PC-3 (cell line): ENCODE measurements at regions of chr3 and their contacts with region 1.

Region 1: GRCh38 chr3:51879937-51880336 is 4.5 kb upstream of the IQCF5 start:
- DNase-seq: peak; percentile 27
- ATAC-seq: no peak; the same call in 1 of the 2 replicates
- H3K4me3 ChIP-seq: no peak overlapping the region
- H3K27ac ChIP-seq: no peak overlapping the region
- H3K4me1 ChIP-seq: peaks cover 5% of the 10 kb centered on the region; the same call in 1 of the 2 replicates
- H3K27me3 ChIP-seq: peaks cover 6% of the 10 kb centered on the region; the same call in 1 of the 2 replicates
- CTCF ChIP-seq: no peak

Region 2: GRCh38 chr3:51845129-51845528 is 34.8 kb before region 1 on chr3:
- CTCF ChIA-PET with region 1: no interaction called
- POLR2A ChIA-PET with region 1: no interaction called
- intact Hi-C with region 1: loop called (anchors 1 kb)
- DNase-seq: no peak
- ATAC-seq: no peak
- H3K4me3 ChIP-seq: no peak overlapping the region
- H3K27ac ChIP-seq: no peak overlapping the region
- H3K4me1 ChIP-seq: no peaks in the 10 kb centered on the region
- H3K27me3 ChIP-seq: peaks cover 74% of the 10 kb centered on the region
- CTCF ChIP-seq: no peak

Region 3: DNA sequence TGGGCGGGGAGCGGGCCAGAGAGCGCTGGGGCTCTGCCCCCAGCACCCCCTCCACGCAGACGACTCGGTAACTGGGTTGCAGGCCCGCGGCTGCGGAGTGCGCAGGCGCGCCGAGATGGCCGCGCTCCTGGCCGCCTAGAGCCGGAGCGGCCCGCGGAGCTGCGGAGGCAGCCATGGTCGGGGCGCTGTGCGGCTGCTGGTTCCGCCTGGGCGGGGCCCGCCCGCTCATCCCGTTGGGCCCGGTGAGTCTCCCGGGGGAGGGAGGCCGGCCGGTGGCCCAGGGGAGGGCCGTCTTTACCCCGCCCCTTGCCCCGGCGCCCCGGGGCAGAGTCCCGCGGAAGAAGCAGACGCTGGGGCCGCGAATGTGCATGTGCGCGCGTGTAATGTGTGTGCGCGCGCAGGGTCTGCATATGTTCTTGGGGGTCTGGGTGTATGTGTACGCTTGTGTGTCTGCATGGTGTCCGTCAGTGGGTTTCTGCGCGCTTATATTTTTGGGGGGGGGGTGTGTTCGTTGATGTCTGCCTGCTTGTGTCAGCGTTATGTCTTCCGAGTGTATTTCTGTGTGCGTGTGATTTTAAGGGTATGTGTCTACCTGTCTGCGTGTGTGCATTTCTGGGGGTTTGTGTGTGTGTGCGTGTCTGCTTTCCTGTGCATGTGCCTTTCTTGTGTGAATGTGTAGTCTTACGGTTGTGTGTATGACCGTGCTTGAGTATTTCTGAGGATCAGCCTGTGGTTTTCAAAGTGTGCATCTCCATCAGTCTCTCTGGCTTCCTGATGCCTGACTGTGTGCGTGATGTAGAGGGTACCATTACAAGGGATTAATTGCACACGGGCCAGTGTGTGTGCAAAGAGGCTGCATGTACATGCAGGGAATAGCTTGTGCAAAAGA is 95.3 kb after region 1 on chr3 and contains the start of gene ABHD14A:
- CTCF ChIA-PET with region 1: no interaction called
- POLR2A ChIA-PET with region 1: no interaction called
- intact Hi-C with region 1: no loop called
- DNase-seq: peak; percentile 81
- ATAC-seq: peak; percentile 69
- H3K4me3 ChIP-seq: peak within 1 kb of the TSS; percentile 99
- H3K27ac ChIP-seq: peak within 1 kb of the TSS; percentile 32
- H3K4me1 ChIP-seq: peaks cover 23% of the 10 kb centered on the region
- H3K27me3 ChIP-seq: no peaks in the 10 kb centered on the region
- CTCF ChIP-seq: no peak
- total RNA-seq, gene ABHD14A: 22.1 and 23.4 TPM in 2 replicates

Region 4: DNA sequence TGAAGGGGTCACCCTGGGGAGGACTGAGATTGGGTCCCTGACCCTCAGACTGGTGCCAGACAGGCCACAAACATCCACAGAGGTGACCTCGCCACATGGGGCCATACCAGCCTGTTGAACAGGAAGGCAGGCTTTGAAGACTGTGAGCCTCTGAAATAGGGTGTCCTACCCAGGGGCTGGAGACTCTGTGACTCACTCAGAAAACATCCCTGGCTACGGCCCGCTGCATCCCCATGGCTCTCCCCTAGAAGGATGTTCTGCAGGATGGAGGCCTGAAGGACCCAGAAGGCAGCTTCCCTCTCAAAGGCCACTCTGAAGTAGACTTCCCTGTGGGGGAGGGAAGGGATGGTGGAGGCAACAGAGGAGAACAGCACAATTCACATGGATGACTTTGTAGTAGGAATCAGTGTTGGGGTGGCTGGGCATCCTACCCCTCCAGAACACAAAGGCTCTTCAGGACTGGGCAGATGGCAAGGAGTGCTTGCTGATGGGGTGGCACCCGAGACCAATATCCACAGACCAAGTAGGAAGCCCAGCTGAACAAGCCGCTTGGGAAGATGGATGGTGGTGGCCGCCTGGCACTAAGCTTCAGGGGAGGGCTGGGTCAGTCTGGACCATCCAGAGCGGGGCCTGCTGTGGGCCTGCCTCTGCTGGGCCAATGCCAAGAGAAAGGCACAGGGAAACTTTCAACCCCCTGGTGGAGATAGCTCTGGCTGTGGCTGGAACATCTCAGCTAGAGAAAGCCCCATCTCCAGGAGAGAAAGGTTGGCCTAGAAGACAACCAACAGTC is 214.0 kb after region 1 on chr3:
- CTCF ChIA-PET with region 1: no interaction called
- POLR2A ChIA-PET with region 1: no interaction called
- intact Hi-C with region 1: no loop called
- DNase-seq: peak; percentile 33
- ATAC-seq: peak; percentile 37
- H3K4me3 ChIP-seq: no peak overlapping the region
- H3K27ac ChIP-seq: no peak overlapping the region
- H3K4me1 ChIP-seq: peaks cover 22% of the 10 kb centered on the region
- H3K27me3 ChIP-seq: no peaks in the 10 kb centered on the region
- CTCF ChIP-seq: no peak